Left ventricle myocardium superior (tissue), 1 donor: ENCODE measurements at regions of chr10 and their contacts with region 1.

Region 1: GRCh38 chr10:58177362-58177947 is 90.2 kb downstream of the IPMK start:
- DNase-seq: no peak
- ATAC-seq: no peak

Region 2: DNA sequence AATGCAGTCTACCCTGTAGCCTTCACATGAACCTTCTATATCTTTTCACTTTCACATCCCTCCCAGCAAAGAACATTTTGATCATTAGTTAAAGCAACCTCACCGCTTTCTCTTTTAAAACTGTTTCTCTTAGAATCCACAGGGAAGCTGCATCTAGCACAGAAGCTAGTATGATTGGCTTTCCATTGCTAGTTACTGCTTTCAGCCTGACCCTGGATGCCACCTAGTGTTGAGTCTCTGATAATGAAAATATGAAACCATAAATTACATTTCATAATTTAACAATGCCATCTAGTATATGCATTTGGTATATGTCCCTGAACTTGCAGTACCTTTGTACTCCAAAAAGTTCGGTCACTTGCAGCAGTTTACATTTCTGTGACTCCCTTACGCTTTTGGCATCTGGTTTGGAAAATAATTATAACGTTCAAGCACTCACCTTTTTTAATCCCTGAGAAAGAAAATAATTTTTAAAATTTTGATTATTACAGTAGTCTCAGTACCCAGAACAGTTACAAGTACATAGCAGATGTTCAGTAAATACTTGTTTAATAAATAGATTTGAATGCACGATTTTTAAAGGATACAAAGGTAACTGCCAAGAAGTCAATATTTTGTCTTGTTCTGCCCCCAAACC is 114.2 kb after region 1 on chr10:
- intact Hi-C with region 1: loop called (anchors 2 kb)
- DNase-seq: no peak
- ATAC-seq: peak; percentile 60

Region 3: DNA sequence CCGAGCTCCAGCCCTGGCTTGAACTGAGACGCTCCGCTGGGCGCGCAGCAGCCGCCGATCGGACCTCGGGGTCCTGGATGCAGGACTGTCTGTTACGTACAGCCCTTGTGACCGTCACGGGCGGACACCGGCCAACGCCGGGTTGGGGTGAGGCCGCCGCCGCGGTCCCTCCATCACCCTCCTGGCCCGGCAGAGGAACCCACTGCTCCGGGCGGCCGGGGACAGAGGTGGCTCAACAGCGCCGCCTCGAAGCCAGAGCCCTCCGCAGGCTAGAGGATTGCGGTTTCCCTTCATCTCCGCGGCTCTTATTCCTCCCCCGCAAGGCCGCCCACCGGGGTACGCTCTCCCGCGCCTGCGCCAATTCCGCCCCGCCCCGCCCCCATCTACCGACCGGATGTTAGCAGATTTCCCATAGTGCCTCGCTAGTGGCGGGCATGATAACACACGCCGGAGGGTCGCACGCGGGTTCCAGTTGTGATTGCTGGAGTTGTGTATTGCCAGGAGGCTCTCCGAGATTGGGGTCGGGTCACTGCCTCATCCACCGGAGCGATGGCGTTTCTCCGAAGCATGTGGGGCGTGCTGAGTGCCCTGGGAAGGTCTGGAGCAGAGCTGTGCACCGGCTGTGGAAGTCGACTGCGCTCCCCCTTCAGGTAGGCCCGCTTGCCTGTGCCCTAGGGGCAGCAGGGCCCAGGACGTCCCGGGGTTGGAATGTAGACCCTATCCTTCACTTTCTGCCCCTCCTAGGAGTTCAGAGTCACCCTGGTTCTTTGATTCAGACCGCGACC is 207.7 kb after region 1 on chr10 and contains the start of gene TFAM:
- intact Hi-C with region 1: loop called (anchors 10 kb)
- DNase-seq: peak; percentile 98
- ATAC-seq: peak; percentile 99
- total RNA-seq, gene TFAM: 33.2 TPM